Activated CD4-positive, alpha-beta memory T cell treated with anti-CD3 and anti-CD28 coated beads, Interleukin-2, amount 10 ng/mL, durations not matched to agents 7 days and 5 days (primary cell): ENCODE measurements at regions of chr3 and their contacts with region 1.

Region 1: DNA sequence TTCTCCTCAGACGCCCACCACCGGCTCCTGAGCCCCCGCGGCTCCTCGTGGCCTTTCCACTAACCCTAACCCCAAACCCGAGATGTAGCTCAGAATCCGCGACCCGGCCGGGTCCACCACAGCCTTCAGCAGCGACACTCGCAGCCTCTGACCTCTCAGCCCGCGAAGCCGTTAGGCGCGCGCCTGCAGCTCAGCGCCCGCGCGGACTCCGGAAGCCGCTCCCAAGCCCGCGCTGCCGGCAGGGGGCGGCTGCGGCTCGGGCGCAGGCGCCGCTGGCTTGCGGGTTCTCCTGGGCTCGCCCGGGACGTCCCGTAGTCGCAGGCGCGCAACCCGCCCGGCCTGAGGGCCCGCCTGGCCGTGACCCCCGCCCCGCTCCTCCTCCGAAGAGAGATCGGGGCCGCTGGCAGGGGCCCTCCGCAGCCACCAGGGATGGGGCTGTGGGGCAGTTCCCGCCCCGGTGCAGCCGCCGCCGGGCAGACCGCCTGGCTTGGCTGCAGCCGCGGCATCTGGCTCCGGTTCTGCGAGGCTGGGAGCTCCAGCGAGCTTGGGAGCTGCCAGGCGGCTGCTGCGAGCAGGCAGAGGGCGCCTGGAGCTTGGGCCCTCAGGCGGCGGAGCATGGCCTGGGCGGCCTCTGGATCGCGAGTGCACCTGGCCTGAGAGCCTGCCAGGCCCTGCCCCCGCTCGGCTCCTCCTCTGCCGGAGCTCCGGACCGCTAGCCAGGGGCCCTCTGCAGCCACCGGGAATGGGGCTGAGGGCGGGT is 120.7 kb downstream of the LMLN start:
- DNase-seq: peak; percentile 81
- H3K4me3 Mint-ChIP-seq: peak overlapping the region; percentile 75
- H3K27ac Mint-ChIP-seq: no peak overlapping the region
- H3K4me1 Mint-ChIP-seq: peaks cover 7% of the 10 kb centered on the region
- H3K27me3 Mint-ChIP-seq: peaks cover 52% of the 10 kb centered on the region

Region 2: DNA sequence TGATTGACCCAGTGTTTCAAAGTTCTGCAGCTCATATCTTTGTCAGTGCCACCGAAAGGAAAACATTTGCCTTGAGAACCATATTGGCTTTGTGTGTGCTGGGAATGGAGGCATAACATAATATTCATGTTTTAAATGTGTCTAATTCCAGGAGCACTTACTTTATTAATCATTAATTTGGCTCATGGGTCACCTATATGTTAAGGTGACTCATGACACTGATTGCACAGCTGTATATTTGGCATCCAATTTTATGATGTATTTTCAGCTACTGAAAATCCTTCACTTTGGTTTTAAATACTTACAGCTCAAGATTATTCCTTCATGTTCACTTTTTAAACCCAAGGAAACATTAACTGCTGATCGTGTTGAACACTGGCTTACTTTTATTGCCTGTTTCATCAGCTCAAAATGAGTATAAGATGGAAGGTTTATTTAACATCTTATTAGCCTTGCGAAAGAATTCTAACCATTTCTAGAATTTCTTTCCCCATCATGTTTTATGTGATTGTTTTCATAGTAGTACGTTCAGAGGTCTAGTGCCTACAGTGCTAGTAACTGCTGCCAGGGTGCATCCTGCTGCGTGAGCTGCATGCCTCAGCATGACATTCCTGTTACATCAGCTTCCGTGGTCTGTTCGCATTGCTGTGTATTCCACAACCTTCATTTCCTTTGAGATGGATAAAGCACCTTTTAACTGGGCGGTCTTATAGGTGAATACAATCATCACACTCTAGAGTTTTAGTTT is 225.9 kb before region 1 on chr3:
- CTCF ChIA-PET with region 1: no interaction called
- POLR2A ChIA-PET with region 1: no interaction called
- DNase-seq: no peak
- H3K4me3 Mint-ChIP-seq: no peak overlapping the region
- H3K27ac Mint-ChIP-seq: no peak overlapping the region
- H3K4me1 Mint-ChIP-seq: no peaks in the 10 kb centered on the region
- H3K27me3 Mint-ChIP-seq: no peaks in the 10 kb centered on the region

Region 3: DNA sequence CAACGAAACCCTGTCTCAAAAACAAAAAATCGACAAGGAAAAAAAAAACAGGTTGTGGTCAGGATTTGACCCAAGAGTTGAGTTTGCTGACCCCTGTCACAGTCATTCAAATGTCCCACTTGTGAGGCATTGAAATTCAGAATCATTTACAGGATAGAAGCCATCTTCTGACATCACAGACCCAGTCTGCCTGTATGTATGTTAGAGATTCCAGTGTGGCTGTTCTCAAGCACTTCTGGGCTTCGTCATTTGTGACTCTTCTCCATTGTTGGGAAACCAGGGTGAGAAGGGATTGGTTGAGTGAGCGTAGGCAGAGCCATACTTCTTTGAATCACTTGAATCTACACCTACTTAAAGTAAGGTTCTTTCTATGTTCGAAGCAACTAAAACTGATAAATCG is 63.6 kb before region 1 on chr3:
- CTCF ChIA-PET with region 1: no interaction called
- POLR2A ChIA-PET with region 1: no interaction called
- DNase-seq: no peak
- H3K4me3 Mint-ChIP-seq: no peak overlapping the region
- H3K27ac Mint-ChIP-seq: no peak overlapping the region
- H3K4me1 Mint-ChIP-seq: no peaks in the 10 kb centered on the region
- H3K27me3 Mint-ChIP-seq: no peaks in the 10 kb centered on the region

Region 4: GRCh38 chr3:198061119-198062067 is 19.3 kb before region 1 on chr3:
- CTCF ChIA-PET with region 1: interaction called, 10 read pairs
- POLR2A ChIA-PET with region 1: interaction called, 6 read pairs
- DNase-seq: no peak
- H3K4me3 Mint-ChIP-seq: no peak overlapping the region
- H3K27ac Mint-ChIP-seq: no peak overlapping the region
- H3K4me1 Mint-ChIP-seq: peaks cover 1% of the 10 kb centered on the region
- H3K27me3 Mint-ChIP-seq: peaks cover 6% of the 10 kb centered on the region

Region 5: GRCh38 chr3:198093112-198093679 is 12.5 kb after region 1 on chr3:
- CTCF ChIA-PET with region 1: interaction called, 23 read pairs
- POLR2A ChIA-PET with region 1: interaction called, 5 read pairs
- DNase-seq: no peak
- H3K4me3 Mint-ChIP-seq: no peak overlapping the region
- H3K27ac Mint-ChIP-seq: no peak overlapping the region
- H3K4me1 Mint-ChIP-seq: no peaks in the 10 kb centered on the region
- H3K27me3 Mint-ChIP-seq: peaks cover 36% of the 10 kb centered on the region